HCT116 (cell line): ENCODE measurements at regions of chr3 and their contacts with region 1.

Region 1: GRCh38 chr3:109023656-109024254 is 70.1 kb upstream of the GUCA1C start:
- DNase-seq: peak; percentile 27
- ATAC-seq: peak; percentile 81
- H3K4me3 ChIP-seq: no peak overlapping the region
- H3K27ac ChIP-seq: no peak overlapping the region
- H3K4me1 ChIP-seq: no peaks in the 10 kb centered on the region
- H3K27me3 ChIP-seq: no peaks in the 10 kb centered on the region
- CTCF ChIP-seq: peak; percentile 64 to 83 (median 67); a peak in 5 of 6 replicates
- POLR2A ChIP-seq: no peak
- RAD21 ChIP-seq: peak; percentile 68

Region 2: GRCh38 chr3:108931035-108931434 is 92.7 kb before region 1 on chr3:
- CTCF ChIA-PET with region 1: no interaction called
- POLR2A ChIA-PET with region 1: no interaction called
- RAD21 ChIA-PET with region 1: no interaction called
- intact Hi-C with region 1: no loop called
- DNase-seq: no peak
- ATAC-seq: no peak
- H3K4me3 ChIP-seq: no peak overlapping the region
- H3K27ac ChIP-seq: no peak overlapping the region
- H3K4me1 ChIP-seq: no peaks in the 10 kb centered on the region
- H3K27me3 ChIP-seq: no peaks in the 10 kb centered on the region
- CTCF ChIP-seq: no peak
- POLR2A ChIP-seq: no peak
- RAD21 ChIP-seq: no peak

Region 3: DNA sequence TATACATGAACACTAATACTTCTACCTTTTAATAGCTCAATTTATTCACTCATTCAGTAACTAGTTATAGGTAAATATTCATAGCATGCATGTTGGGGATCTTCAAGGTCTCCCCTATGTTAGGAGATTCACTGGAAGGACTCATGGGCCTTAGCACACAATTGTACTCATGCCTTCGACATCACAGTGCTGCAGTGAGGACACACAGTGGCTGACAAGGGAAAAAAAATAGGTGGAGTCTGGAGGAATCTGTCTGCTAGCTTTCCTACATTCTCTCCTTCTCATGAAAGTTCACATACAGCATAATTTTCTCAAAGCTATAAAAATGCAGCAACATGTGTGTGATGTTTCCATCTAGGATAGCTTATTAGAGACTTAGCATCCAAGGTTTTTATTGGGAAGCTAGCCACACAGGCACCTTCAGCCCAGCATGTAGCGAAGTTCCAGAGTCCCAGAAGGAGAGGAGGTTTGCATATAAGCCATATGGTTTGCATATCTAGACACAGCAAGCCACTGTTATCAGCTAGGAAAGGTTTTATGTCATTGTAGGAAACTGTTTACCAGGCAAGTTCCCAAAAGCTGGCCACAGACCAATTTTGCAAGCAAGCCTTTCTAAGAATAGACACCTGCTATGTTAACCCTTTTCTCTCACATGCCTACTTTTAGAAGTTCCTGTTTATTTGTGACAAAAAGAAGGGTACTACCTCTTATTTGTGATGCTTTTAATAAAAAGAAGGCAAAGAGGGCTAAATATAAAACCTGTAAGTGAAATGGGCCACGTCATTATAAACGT is 47.8 kb after region 1 on chr3:
- CTCF ChIA-PET with region 1: interaction called, 13 read pairs
- POLR2A ChIA-PET with region 1: no interaction called
- RAD21 ChIA-PET with region 1: interaction called, 3 read pairs
- intact Hi-C with region 1: no loop called
- DNase-seq: peak; percentile 1
- ATAC-seq: peak; percentile 74
- H3K4me3 ChIP-seq: no peak overlapping the region
- H3K27ac ChIP-seq: no peak overlapping the region
- H3K4me1 ChIP-seq: no peaks in the 10 kb centered on the region
- H3K27me3 ChIP-seq: no peaks in the 10 kb centered on the region
- CTCF ChIP-seq: peak in 2 of 3 experiments; percentile 16 to 29; a peak in 1 of 6 replicates
- POLR2A ChIP-seq: no peak
- RAD21 ChIP-seq: peak; percentile 44

Region 4: DNA sequence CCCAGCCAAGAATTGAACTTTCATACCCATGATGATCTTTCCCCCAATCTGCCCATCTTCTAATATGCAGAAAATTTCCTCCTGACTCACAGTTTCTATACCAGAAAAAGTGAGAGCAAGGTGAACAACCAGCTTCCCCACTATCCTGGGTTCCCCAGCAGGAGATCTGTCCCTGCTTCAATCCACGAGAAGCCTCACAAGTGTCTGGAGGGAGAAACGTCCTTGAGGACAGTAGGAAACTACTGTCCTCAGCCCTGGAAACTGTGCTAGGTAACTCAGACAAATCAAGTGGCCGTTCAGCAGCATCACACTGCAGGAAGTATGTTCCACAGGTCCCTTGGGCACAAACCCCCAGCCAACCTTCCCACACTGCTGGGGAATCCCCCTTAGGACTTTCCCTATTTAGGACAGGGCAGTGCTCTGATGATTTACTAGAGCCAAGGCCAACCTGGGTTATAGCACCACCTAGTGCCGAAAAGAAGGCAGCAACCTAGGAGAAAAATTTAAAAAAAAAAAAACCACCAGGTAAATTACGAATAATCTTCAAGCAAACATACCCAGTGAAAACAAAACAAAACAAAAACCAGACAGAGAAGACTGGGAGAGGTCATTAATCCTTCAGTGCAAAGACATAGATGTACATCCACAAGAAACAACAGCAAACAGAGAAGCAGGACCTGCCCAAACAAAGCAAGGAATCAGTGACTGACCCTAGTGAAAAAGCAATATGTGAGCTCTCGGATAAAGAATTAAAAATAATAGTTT is 58.2 kb after region 1 on chr3:
- CTCF ChIA-PET with region 1: interaction called, 36 read pairs
- POLR2A ChIA-PET with region 1: no interaction called
- RAD21 ChIA-PET with region 1: interaction called in 1 of 2 experiments, 4 read pairs
- intact Hi-C with region 1: loop called (anchors 1 kb)
- DNase-seq: peak; percentile 48
- ATAC-seq: peak; percentile 91
- H3K4me3 ChIP-seq: no peak overlapping the region
- H3K27ac ChIP-seq: no peak overlapping the region
- H3K4me1 ChIP-seq: no peaks in the 10 kb centered on the region; a peak in 1 of 4 replicates
- H3K27me3 ChIP-seq: no peaks in the 10 kb centered on the region
- CTCF ChIP-seq: peak; percentile 59 to 90 (median 77); a peak in 5 of 6 replicates
- POLR2A ChIP-seq: no peak
- RAD21 ChIP-seq: peak; percentile 74

Region 5: DNA sequence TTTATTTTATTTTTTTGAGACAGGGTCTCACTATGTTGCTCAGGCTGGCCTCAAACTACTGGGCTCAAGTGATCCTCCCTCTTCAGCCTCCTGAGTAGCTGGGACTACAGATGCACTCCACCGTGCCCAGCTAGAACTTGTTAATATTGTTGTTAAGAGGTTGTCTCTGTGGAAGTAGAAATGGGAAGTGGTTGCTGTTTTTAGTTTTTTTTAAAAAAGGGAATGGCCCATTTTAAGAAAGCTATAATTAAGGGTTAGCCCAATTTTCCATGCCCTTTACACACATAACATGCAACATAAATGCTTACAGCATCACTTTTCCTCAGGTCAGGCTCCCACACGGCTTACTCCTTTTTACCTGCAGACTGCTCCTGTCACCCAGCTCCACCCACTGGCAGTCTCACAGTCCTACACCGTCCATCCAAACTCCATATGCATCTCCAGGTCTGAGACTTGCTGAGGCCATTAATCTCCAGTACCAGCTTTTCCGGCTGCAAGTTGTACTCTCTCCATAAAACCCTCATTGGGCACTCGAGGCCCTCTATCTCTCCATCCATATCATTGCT is 74.4 kb after region 1 on chr3:
- CTCF ChIA-PET with region 1: interaction called, 24 read pairs
- POLR2A ChIA-PET with region 1: no interaction called
- RAD21 ChIA-PET with region 1: interaction called in 1 of 2 experiments, 3 read pairs
- intact Hi-C with region 1: no loop called
- DNase-seq: peak; percentile 50
- ATAC-seq: peak; percentile 100
- H3K4me3 ChIP-seq: no peak overlapping the region
- H3K27ac ChIP-seq: no peak overlapping the region
- H3K4me1 ChIP-seq: no peaks in the 10 kb centered on the region
- H3K27me3 ChIP-seq: no peaks in the 10 kb centered on the region
- CTCF ChIP-seq: peak; percentile 20 to 77 (median 65); a peak in 4 of 6 replicates
- POLR2A ChIP-seq: no peak
- RAD21 ChIP-seq: peak; percentile 56

Region 6: DNA sequence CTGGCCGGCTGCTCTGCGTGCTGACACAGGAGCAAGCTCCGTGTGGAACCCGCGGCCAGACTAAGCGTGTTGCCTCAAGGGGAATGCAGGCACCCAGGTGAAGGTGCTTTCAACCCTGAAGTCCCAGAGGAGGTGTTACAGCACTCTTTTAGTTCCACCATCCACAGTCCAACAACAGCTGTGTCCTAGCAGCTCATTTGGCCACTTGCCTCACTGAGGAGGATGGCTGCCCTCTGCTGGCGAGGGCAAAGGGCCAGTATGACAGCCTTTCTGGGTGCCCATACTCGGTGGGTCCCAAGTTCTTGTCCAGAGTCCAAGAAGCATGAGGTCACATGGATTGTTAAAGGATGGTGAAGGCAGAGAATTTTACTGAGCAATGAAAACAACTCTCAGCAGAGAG is 200.6 kb after region 1 on chr3:
- CTCF ChIA-PET with region 1: interaction called, 31 read pairs
- POLR2A ChIA-PET with region 1: no interaction called
- RAD21 ChIA-PET with region 1: interaction called in 1 of 2 experiments, 8 read pairs
- intact Hi-C with region 1: loop called (anchors 10 kb)
- DNase-seq: peak; percentile 6
- ATAC-seq: peak; percentile 89
- H3K4me3 ChIP-seq: no peak overlapping the region
- H3K27ac ChIP-seq: no peak overlapping the region
- H3K4me1 ChIP-seq: no peaks in the 10 kb centered on the region
- H3K27me3 ChIP-seq: no peaks in the 10 kb centered on the region
- CTCF ChIP-seq: peak; percentile 36 to 88 (median 82); a peak in 5 of 6 replicates
- POLR2A ChIP-seq: no peak
- RAD21 ChIP-seq: peak; percentile 62

Region 7: GRCh38 chr3:109396806-109397205 is 373.1 kb after region 1 on chr3:
- CTCF ChIA-PET with region 1: interaction called, 11 read pairs
- POLR2A ChIA-PET with region 1: no interaction called
- RAD21 ChIA-PET with region 1: no interaction called
- intact Hi-C with region 1: no loop called
- DNase-seq: no peak
- ATAC-seq: no peak
- H3K4me3 ChIP-seq: no peak overlapping the region
- H3K27ac ChIP-seq: no peak overlapping the region
- H3K4me1 ChIP-seq: no peaks in the 10 kb centered on the region
- H3K27me3 ChIP-seq: no peaks in the 10 kb centered on the region
- CTCF ChIP-seq: no peak
- POLR2A ChIP-seq: no peak
- RAD21 ChIP-seq: no peak

Region 8: GRCh38 chr3:109656225-109656624 is 632.5 kb after region 1 on chr3:
- CTCF ChIA-PET with region 1: no interaction called
- POLR2A ChIA-PET with region 1: no interaction called
- RAD21 ChIA-PET with region 1: no interaction called
- intact Hi-C with region 1: no loop called
- DNase-seq: no peak
- ATAC-seq: no peak
- H3K4me3 ChIP-seq: no peak overlapping the region
- H3K27ac ChIP-seq: no peak overlapping the region
- H3K4me1 ChIP-seq: no peaks in the 10 kb centered on the region
- H3K27me3 ChIP-seq: no peaks in the 10 kb centered on the region
- CTCF ChIP-seq: no peak
- POLR2A ChIP-seq: no peak
- RAD21 ChIP-seq: no peak